Endothelial cell of umbilical vein (primary cell): ENCODE measurements at regions of chr1 and their contacts with region 1.

Region 1: GRCh38 chr1:175742790-175743459 is 470 bp downstream of the TNR start:
- DNase-seq: peak; percentile 55
- H3K4me3 ChIP-seq: no peak overlapping the region
- H3K27ac ChIP-seq: no peak overlapping the region
- H3K4me1 ChIP-seq: no peaks in the 10 kb centered on the region
- H3K27me3 ChIP-seq: peaks cover 2 to 5% of the 10 kb centered on the region in 2 experiments
- CTCF ChIP-seq: no peak
- POLR2A ChIP-seq: no peak

Region 2: DNA sequence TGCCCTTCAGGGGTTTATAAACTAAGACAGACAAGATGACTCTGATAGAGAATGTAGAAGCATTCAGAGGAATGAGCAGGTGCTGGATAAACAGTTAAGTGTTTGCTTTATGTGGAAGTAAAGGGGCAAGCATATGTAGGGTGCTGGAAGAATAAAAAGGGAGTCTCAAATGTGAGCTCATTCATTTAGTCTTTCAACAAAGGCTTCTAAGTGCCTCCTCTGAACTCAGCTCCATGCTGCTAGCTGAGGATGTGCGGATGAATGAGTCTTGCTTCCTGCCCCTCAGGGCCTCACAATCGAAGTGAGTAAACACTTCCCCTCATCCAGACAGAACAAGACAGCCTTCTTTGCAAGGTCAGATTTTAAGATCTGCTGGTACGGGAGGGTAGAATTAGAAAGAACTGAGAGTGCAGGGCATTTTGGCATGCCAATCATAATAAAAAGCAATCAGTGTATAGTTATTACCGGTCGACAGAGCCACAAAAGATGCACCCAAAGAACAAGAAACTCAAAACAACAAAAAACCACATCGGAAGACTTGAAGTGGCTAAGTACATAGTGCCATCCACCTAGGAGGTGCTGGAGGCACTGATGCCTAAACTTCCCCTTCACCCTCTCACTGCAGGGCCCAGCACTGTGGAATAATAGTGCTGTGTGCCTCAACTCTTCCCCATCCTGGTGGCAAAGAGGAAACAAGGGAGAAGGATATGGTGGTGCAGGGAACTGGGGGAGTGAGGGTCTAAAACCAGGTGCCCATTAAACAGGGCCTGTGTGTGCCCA is 69.4 kb before region 1 on chr1:
- CTCF ChIA-PET with region 1: interaction called, 12 read pairs
- POLR2A ChIA-PET with region 1: no interaction called
- dilution Hi-C with region 1: no loop called
- intact Hi-C with region 1: no loop called
- DNase-seq: peak; percentile 82
- H3K4me3 ChIP-seq: no peak overlapping the region
- H3K27ac ChIP-seq: peak overlapping the region; percentile 69
- H3K4me1 ChIP-seq: peaks cover 25% of the 10 kb centered on the region
- H3K27me3 ChIP-seq: no peaks in the 10 kb centered on the region
- CTCF ChIP-seq: no peak
- POLR2A ChIP-seq: no peak

Region 3: GRCh38 chr1:175720023-175720422 is 22.9 kb before region 1 on chr1:
- CTCF ChIA-PET with region 1: interaction called, 20 read pairs
- POLR2A ChIA-PET with region 1: no interaction called
- dilution Hi-C with region 1: no loop called
- intact Hi-C with region 1: no loop called
- DNase-seq: no peak
- H3K4me3 ChIP-seq: no peak overlapping the region
- H3K27ac ChIP-seq: no peak overlapping the region
- H3K4me1 ChIP-seq: no peaks in the 10 kb centered on the region
- H3K27me3 ChIP-seq: peaks cover 0 to 2% of the 10 kb centered on the region in 2 experiments
- CTCF ChIP-seq: no peak
- POLR2A ChIP-seq: no peak

Region 4: DNA sequence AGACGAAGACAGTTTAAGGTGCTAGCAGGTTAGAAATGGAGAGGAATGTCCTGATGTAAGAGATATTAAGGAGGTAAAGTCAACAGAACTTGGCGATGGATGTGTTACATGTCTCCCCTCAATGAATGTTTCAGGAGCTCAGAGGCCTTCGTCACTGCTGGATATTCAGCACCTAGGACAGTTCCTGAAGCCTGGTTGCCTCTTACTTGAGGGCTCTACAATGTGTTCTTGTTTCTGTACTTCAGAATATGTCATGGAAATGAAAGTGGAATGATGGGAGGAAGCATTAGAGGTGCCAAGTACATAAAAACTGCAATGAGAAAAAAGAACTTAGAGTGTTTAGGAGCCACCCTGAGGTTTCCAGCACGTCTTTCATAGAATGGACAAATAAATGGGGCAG is 17.2 kb before region 1 on chr1:
- CTCF ChIA-PET with region 1: interaction called, 20 read pairs
- POLR2A ChIA-PET with region 1: no interaction called
- dilution Hi-C with region 1: no loop called
- intact Hi-C with region 1: no loop called
- DNase-seq: peak; percentile 54
- H3K4me3 ChIP-seq: no peak overlapping the region
- H3K27ac ChIP-seq: no peak overlapping the region
- H3K4me1 ChIP-seq: no peaks in the 10 kb centered on the region
- H3K27me3 ChIP-seq: no peaks in the 10 kb centered on the region
- CTCF ChIP-seq: no peak
- POLR2A ChIP-seq: no peak

Region 5: GRCh38 chr1:175817445-175817844 is 74.5 kb after region 1 on chr1:
- CTCF ChIA-PET with region 1: interaction called, 11 read pairs
- POLR2A ChIA-PET with region 1: no interaction called
- dilution Hi-C with region 1: no loop called
- intact Hi-C with region 1: no loop called
- DNase-seq: no peak
- H3K4me3 ChIP-seq: no peak overlapping the region
- H3K27ac ChIP-seq: no peak overlapping the region
- H3K4me1 ChIP-seq: no peaks in the 10 kb centered on the region
- H3K27me3 ChIP-seq: no peaks in the 10 kb centered on the region
- CTCF ChIP-seq: no peak
- POLR2A ChIP-seq: no peak

Region 6: GRCh38 chr1:176073524-176074157 is 330.7 kb after region 1 on chr1:
- CTCF ChIA-PET with region 1: interaction called, 4 read pairs
- POLR2A ChIA-PET with region 1: no interaction called
- dilution Hi-C with region 1: no loop called
- intact Hi-C with region 1: loop called (anchors 5 kb)
- DNase-seq: peak; percentile 78
- H3K4me3 ChIP-seq: no peak overlapping the region
- H3K27ac ChIP-seq: no peak overlapping the region
- H3K4me1 ChIP-seq: no peaks in the 10 kb centered on the region
- H3K27me3 ChIP-seq: no peaks in the 10 kb centered on the region
- CTCF ChIP-seq: peak; percentile 52 to 56
- POLR2A ChIP-seq: no peak